Ovary (tissue), 10 donors: ENCODE measurements at regions of chr12 and their contacts with region 1.

Region 1: DNA sequence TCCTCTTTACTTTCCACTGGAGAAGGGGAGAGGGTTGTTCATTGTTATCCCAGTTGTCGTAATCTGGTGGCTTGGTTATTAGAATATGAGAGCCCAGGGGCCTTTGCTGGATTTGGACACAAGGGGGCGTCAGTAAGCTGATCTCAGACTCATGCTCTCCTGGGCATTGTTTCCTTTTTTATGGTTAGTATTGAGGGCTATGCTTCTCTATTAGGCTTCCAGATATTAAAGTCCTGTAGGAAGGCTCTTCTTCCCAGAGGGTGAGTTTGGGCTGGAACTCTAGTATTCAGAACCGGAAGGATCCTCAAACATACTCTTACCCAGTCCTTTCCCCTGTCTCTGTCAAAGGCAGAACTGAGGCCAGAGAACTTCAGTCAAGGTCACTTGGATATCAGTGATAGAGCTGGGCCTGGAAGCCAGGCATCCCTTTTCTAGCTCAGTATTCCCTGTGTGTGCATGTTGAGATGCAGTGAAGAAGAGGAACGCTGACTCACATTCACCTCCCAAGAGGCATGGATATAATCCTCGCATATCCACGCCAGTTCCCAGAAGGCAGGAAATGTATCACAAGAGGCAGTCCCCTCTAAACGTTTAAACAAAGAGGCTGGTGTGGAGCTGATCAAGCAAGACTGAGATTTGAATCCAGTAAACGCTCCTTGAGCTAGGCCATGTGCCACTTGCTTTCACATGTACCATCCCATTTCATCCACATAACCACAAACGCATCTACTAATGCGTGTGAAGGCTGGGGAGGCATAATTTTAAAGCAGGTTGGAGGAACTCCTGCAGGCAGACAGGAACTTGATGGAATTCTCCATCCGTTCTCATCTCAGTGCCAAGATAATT is 41.6 kb downstream of the UBE3B start:
- DNase-seq: peak; percentile 57 to 78 (median 71)
- H3K4me3 ChIP-seq: no peak overlapping the region
- H3K27ac ChIP-seq: peak overlapping the region in 1 of 2 donors; percentile 51
- H3K4me1 ChIP-seq: peaks cover 2% of the 10 kb centered on the region
- H3K27me3 ChIP-seq: no peaks in the 10 kb centered on the region
- CTCF ChIP-seq: peak in 2 of 3 donors; percentile 39 to 55
- EP300 ChIP-seq: no peak
- POLR2A ChIP-seq: no peak

Region 2: GRCh38 chr12:109713187-109713984 is 194.3 kb after region 1 on chr12 and contains the start of gene FAM222A:
- intact Hi-C with region 1: loop called in 1 of 4 experiments (anchors 10 kb)
- DNase-seq: peak; percentile 98 to 99 (median 98)
- H3K4me3 ChIP-seq: peak within 1 kb of the TSS; percentile 60
- H3K27ac ChIP-seq: peak within 1 kb of the TSS; percentile 71 to 86
- H3K4me1 ChIP-seq: peaks cover 10% of the 10 kb centered on the region
- H3K27me3 ChIP-seq: no peaks in the 10 kb centered on the region
- CTCF ChIP-seq: peak in 2 of 3 donors; percentile 36 to 39
- EP300 ChIP-seq: no peak
- POLR2A ChIP-seq: peak; percentile 30
- total RNA-seq, gene FAM222A: 7.2 to 28.4 (median 15.3) TPM

Region 3: DNA sequence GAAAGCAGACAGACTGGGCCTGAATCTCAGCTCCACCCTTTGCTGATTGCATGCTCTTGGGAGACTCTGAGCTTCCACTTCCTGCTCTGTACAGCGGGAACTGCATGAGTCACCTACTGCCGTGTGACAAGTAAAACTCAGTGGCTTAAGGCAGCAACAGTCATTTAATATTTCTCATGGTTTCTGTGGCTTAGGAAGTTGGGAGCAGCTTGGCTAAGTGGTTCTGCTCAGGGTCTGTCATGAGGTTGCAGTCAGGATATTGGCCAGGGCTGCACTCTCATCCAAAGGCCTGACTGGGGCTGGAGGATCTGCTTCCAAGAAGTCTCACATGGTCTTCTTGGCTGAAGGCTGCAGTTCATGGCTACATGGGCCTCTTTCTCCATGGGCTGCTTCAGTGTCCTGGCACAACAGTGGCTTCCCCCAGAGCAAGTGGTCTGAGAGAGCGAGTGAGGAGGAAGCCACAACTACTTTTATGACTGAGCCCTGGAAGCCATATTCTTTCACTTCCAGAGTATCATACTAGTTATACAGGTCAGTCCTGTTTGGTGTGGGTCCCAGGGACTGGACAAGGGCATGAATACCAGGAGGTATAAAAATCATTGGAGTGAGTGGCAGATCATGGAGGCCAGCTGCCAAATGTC is 244.3 kb after region 1 on chr12:
- intact Hi-C with region 1: loop called in 1 of 4 experiments (anchors 10 kb)
- DNase-seq: peak in 2 of 5 donors; percentile 2 to 8
- H3K4me3 ChIP-seq: no peak overlapping the region
- H3K27ac ChIP-seq: no peak overlapping the region
- H3K4me1 ChIP-seq: peaks cover 19% of the 10 kb centered on the region
- H3K27me3 ChIP-seq: no peaks in the 10 kb centered on the region
- CTCF ChIP-seq: no peak
- EP300 ChIP-seq: no peak
- POLR2A ChIP-seq: no peak